Naive thymus-derived CD4-positive, alpha-beta T cell (primary cell): ENCODE measurements at regions of chr9 and their contacts with region 1.

Region 1: DNA sequence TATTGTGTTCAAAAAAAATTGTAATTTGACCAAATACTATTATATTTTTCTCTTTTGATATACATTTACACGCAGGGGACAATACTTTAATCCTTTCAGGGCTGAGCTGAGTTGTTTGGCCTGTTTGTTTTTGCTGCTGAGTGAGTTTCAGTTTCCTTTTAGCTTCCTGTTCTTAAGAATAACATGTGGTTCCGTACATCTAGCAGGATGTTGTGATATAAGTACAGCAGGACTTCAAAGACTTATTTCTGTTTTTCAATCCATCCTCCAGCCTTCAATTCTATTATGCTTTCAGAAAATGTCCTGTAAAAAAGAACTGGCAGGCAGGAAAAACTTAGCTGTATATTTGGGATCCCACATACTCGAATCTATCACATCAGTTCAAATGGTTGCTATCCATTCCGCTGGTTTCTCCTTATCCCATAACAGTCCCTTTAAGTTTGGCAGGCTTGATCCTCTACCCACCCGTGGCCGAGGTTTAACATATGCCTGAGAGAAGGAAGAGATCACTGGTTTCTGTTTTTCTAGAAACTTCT is 1037.3 kb upstream of the ACO1 start:
- DNase-seq: peak in 7 of 9 donors; percentile 58 to 81 (median 72)
- ATAC-seq: peak; percentile 97
- H3K4me3 ChIP-seq: peak overlapping the region; percentile 36
- H3K4me3 Mint-ChIP-seq: peak overlapping the region; percentile 63 to 82 (median 72)
- H3K27ac ChIP-seq: peak overlapping the region; percentile 77
- H3K27ac Mint-ChIP-seq: peak overlapping the region; percentile 93 to 98 (median 96)
- H3K4me1 ChIP-seq: peaks cover 25 to 26% of the 10 kb centered on the region in 2 donors
- H3K4me1 Mint-ChIP-seq: peaks cover 8 to 73% (median 58%) of the 10 kb centered on the region in 7 donors
- H3K27me3 ChIP-seq: no peaks in the 10 kb centered on the region
- H3K27me3 Mint-ChIP-seq: no peaks in the 10 kb centered on the region

Region 2: DNA sequence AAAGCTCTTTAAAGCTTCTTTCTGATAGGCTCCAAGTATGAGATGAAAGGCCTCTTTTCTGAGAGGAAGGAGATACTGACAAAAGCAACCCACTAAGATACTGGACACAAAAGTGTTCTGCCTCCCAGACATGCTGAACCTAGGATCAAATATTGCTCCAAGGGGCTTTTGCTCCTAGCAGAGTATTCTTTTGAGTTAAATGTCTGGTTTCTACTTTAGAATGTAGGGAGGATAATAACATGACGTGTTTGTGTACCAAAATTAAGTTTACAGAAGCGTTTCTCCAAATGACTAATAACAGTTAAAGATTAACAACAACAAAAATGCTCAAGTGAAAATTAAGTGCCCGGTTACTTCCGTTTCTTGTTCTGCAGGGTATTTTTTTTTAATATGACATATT is 1480.6 kb before region 1 on chr9:
- CTCF ChIA-PET with region 1: no interaction called
- POLR2A ChIA-PET with region 1: no interaction called
- intact Hi-C with region 1: loop called in 1 of 2 experiments (anchors 10 kb)
- DNase-seq: peak in 1 of 9 donors; percentile 16
- ATAC-seq: no peak
- H3K4me3 ChIP-seq: no peak overlapping the region
- H3K4me3 Mint-ChIP-seq: no peak overlapping the region
- H3K27ac ChIP-seq: no peak overlapping the region
- H3K27ac Mint-ChIP-seq: no peak overlapping the region
- H3K4me1 ChIP-seq: no peaks in the 10 kb centered on the region
- H3K4me1 Mint-ChIP-seq: no peaks in the 10 kb centered on the region
- H3K27me3 ChIP-seq: no peaks in the 10 kb centered on the region
- H3K27me3 Mint-ChIP-seq: no peaks in the 10 kb centered on the region

Region 3: GRCh38 chr9:31153250-31153840 is 193.8 kb before region 1 on chr9:
- CTCF ChIA-PET with region 1: no interaction called
- POLR2A ChIA-PET with region 1: no interaction called
- intact Hi-C with region 1: no loop called
- DNase-seq: peak in 1 of 9 donors; percentile 6
- ATAC-seq: no peak
- H3K4me3 ChIP-seq: no peak overlapping the region
- H3K4me3 Mint-ChIP-seq: no peak overlapping the region
- H3K27ac ChIP-seq: no peak overlapping the region
- H3K27ac Mint-ChIP-seq: no peak overlapping the region
- H3K4me1 ChIP-seq: no peaks in the 10 kb centered on the region
- H3K4me1 Mint-ChIP-seq: peaks cover 0 to 17% (median 4%) of the 10 kb centered on the region in 7 donors
- H3K27me3 ChIP-seq: no peaks in the 10 kb centered on the region
- H3K27me3 Mint-ChIP-seq: no peaks in the 10 kb centered on the region

Region 4: GRCh38 chr9:31304576-31304975 is 42.6 kb before region 1 on chr9:
- CTCF ChIA-PET with region 1: interaction called, 8 read pairs
- POLR2A ChIA-PET with region 1: no interaction called
- intact Hi-C with region 1: loop called (anchors 1 to 2 kb)
- DNase-seq: no peak
- ATAC-seq: no peak
- H3K4me3 ChIP-seq: no peak overlapping the region
- H3K4me3 Mint-ChIP-seq: no peak overlapping the region
- H3K27ac ChIP-seq: no peak overlapping the region
- H3K27ac Mint-ChIP-seq: no peak overlapping the region
- H3K4me1 ChIP-seq: peaks cover 6 to 10% of the 10 kb centered on the region in 2 donors
- H3K4me1 Mint-ChIP-seq: peaks cover 8 to 40% (median 34%) of the 10 kb centered on the region in 7 donors
- H3K27me3 ChIP-seq: no peaks in the 10 kb centered on the region
- H3K27me3 Mint-ChIP-seq: no peaks in the 10 kb centered on the region

Region 5: GRCh38 chr9:31335529-31336234 is 11.5 kb before region 1 on chr9:
- CTCF ChIA-PET with region 1: no interaction called
- POLR2A ChIA-PET with region 1: interaction called, 22 read pairs
- intact Hi-C with region 1: loop called (anchors 1 kb)
- DNase-seq: peak in 1 of 9 donors; percentile 17
- ATAC-seq: no peak
- H3K4me3 ChIP-seq: peak overlapping the region; percentile 12
- H3K4me3 Mint-ChIP-seq: peak overlapping the region; percentile 3 to 71 (median 55)
- H3K27ac ChIP-seq: no peak overlapping the region
- H3K27ac Mint-ChIP-seq: peak overlapping the region in 6 of 9 donors; percentile 34 to 92 (median 59)
- H3K4me1 ChIP-seq: peaks cover 23 to 26% of the 10 kb centered on the region in 2 donors
- H3K4me1 Mint-ChIP-seq: peaks cover 6 to 28% (median 20%) of the 10 kb centered on the region in 7 donors
- H3K27me3 ChIP-seq: no peaks in the 10 kb centered on the region
- H3K27me3 Mint-ChIP-seq: peaks cover 0 to 3% (median 0%) of the 10 kb centered on the region in 5 donors

Region 6: DNA sequence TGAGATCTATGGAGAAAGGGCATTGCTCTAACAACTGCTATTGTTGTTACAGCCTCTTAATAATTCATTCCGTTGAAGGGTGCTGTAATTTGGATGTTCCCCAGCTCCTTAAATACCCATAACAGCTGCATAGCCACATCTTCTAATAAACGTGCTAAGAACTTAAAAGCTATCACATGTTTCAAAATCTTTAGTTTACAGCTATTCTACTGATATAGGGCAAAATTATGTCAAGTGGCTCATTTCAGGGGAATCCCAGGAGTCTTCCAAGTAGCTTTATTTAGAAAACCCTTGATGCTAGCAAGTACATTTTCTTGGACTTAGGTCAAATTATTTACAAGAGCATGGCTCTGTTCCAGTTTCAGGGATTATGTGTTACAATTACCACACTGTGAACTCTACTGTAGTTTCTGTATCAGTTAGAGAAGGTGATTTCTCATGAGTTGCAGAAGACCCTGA is 46.9 kb after region 1 on chr9:
- CTCF ChIA-PET with region 1: no interaction called
- POLR2A ChIA-PET with region 1: no interaction called
- intact Hi-C with region 1: loop called in 1 of 2 experiments (anchors 2 kb)
- DNase-seq: no peak
- ATAC-seq: no peak
- H3K4me3 ChIP-seq: no peak overlapping the region
- H3K4me3 Mint-ChIP-seq: no peak overlapping the region
- H3K27ac ChIP-seq: no peak overlapping the region
- H3K27ac Mint-ChIP-seq: no peak overlapping the region
- H3K4me1 ChIP-seq: peaks cover 0 to 7% of the 10 kb centered on the region in 2 donors
- H3K4me1 Mint-ChIP-seq: peaks cover 4 to 39% (median 26%) of the 10 kb centered on the region in 7 donors
- H3K27me3 ChIP-seq: no peaks in the 10 kb centered on the region
- H3K27me3 Mint-ChIP-seq: no peaks in the 10 kb centered on the region